Activated CD4-positive, alpha-beta memory T cell treated with anti-CD3 and anti-CD28 coated beads, Interleukin-2, amount 10 ng/mL, durations not matched to agents 7 days and 5 days (primary cell): ENCODE measurements at regions of chr10 and their contacts with region 1.

Region 1: GRCh38 chr10:34637418-34637911 is 177.6 kb downstream of the PARD3 start:
- DNase-seq: peak; percentile 62
- H3K4me3 Mint-ChIP-seq: no peak overlapping the region
- H3K27ac Mint-ChIP-seq: no peak overlapping the region
- H3K4me1 Mint-ChIP-seq: peaks cover 2% of the 10 kb centered on the region
- H3K27me3 Mint-ChIP-seq: no peaks in the 10 kb centered on the region

Region 2: DNA sequence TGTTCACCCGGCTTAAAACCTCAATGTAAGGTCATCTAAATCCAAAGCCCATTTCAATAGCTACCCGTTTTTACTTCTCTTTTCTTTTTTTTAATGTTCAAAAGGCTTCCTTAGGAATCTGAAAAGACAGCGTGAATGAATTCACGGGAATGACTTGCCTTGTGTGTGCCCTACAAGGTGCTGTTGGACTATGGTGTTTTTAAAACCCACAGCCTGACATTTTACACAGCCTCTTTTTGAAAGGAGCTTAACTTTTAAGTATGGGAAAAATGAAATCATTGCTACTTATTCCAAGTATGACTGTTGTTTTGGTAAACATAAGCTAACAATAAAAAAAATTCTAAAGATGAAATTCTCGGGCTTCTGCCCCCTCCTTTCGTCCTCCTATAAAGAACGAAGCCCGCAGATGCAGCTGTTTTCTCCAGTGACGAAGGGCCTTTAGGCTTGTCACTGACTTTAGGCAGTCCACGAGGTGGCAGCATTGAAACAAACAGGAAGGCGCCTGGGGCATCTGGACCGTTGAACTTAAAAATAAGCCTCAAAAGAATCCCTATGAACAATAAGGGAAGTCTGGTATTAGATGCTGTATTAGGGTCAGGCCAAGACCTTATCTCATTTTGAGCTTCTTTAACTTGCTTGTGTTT is 1444.3 kb before region 1 on chr10:
- CTCF ChIA-PET with region 1: interaction called, 10 read pairs
- POLR2A ChIA-PET with region 1: no interaction called
- DNase-seq: peak; percentile 78
- H3K4me3 Mint-ChIP-seq: no peak overlapping the region
- H3K27ac Mint-ChIP-seq: no peak overlapping the region
- H3K4me1 Mint-ChIP-seq: peaks cover 4% of the 10 kb centered on the region
- H3K27me3 Mint-ChIP-seq: peaks cover 18% of the 10 kb centered on the region

Region 3: GRCh38 chr10:33330543-33331378 is 1306.7 kb before region 1 on chr10:
- CTCF ChIA-PET with region 1: interaction called, 14 read pairs
- POLR2A ChIA-PET with region 1: no interaction called
- DNase-seq: peak; percentile 80
- H3K4me3 Mint-ChIP-seq: no peak overlapping the region
- H3K27ac Mint-ChIP-seq: no peak overlapping the region
- H3K4me1 Mint-ChIP-seq: peaks cover 28% of the 10 kb centered on the region
- H3K27me3 Mint-ChIP-seq: peaks cover 54% of the 10 kb centered on the region

Region 4: DNA sequence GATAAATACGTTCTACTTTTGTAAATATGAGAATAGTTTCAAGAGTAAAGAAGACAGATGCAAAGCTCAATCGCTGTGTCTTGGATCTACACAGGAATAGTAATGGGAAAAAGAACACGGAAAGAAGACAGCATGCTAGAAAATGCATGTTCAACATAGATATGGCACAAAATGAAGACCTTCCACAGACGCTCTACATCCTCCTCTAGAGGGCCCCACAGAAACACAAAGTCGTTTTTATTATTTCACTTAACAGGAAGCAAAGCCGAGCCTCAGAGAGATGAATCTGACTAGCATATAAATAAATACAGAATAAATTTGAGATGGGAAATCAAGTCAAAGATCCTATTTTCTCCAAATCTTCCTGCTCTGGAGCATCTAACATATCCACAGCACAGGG is 114.9 kb before region 1 on chr10:
- CTCF ChIA-PET with region 1: interaction called, 10 read pairs
- POLR2A ChIA-PET with region 1: no interaction called
- DNase-seq: no peak
- H3K4me3 Mint-ChIP-seq: no peak overlapping the region
- H3K27ac Mint-ChIP-seq: no peak overlapping the region
- H3K4me1 Mint-ChIP-seq: peaks cover 2% of the 10 kb centered on the region
- H3K27me3 Mint-ChIP-seq: peaks cover 12% of the 10 kb centered on the region

Region 5: DNA sequence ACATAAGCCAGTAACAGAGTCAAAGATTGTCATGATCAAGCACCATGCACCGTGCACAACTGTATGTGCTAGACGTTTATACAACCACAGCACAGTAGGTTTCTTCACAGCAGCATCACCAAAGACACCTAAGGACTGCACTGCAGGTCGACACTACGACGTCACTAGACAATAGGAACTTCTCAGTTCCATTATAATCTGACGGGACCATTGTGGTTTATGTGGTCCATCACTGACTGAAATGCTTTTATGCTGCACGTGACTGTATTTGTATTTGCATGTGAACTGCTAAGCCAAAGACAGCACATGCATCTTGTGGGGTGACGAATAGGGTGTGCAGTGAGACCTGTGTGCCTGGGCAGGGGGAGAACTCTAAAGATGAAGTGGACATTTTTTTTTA is 12.7 kb after region 1 on chr10:
- CTCF ChIA-PET with region 1: interaction called, 21 read pairs
- POLR2A ChIA-PET with region 1: no interaction called
- DNase-seq: no peak
- H3K4me3 Mint-ChIP-seq: no peak overlapping the region
- H3K27ac Mint-ChIP-seq: no peak overlapping the region
- H3K4me1 Mint-ChIP-seq: no peaks in the 10 kb centered on the region
- H3K27me3 Mint-ChIP-seq: peaks cover 4% of the 10 kb centered on the region